Activated T-helper 1 cell treated with anti-CD3 and anti-CD28 coated beads, Interleukin-12 subunit alpha, Interleukin-12 subunit beta, Interleukin-2, Interleukin-4 antibody, amounts not matched to agents 30 ng/mL and 10 ng/mL and 1 ng/mL, durations not matched to agents 14 hours and 24 hours and 36 hours (primary cell): ENCODE measurements at regions of chr3 and their contacts with region 1.

Region 1: DNA sequence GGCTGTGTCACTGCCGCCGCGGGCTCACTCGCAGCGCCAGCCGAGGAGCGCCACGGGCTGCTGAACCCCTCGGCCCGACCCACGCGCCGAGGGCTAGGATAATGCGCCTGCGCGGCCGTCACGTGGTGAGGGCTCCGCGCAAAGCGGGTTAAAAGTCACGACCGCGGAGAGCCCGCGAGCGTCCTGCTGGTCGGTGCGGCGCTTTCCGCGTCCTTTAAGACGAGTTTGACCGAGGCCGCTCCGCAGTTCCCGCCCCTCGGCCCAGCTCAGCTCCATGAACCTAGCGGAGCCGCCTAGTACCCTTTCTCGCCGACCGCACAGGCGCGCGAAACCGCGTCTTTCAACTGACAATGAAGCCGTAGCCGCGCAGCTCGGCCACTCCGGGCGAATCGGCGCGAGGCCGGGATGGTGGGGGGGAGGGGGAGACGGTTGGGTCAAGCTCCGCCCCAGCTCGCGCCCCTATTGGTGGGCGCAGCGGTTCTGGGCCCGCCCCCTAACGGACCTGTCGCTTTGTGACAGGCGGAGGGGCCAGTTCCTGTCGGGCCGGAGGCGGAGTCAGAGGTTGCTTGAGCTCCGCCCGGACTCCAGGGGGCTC is 636 bp upstream of the STT3B start:
- DNase-seq: peak; percentile 98
- H3K4me3 Mint-ChIP-seq: no peak overlapping the region
- H3K27ac Mint-ChIP-seq: peak overlapping the region; percentile 99
- H3K4me1 Mint-ChIP-seq: peaks cover 21% of the 10 kb centered on the region
- H3K27me3 Mint-ChIP-seq: no peaks in the 10 kb centered on the region

Region 2: DNA sequence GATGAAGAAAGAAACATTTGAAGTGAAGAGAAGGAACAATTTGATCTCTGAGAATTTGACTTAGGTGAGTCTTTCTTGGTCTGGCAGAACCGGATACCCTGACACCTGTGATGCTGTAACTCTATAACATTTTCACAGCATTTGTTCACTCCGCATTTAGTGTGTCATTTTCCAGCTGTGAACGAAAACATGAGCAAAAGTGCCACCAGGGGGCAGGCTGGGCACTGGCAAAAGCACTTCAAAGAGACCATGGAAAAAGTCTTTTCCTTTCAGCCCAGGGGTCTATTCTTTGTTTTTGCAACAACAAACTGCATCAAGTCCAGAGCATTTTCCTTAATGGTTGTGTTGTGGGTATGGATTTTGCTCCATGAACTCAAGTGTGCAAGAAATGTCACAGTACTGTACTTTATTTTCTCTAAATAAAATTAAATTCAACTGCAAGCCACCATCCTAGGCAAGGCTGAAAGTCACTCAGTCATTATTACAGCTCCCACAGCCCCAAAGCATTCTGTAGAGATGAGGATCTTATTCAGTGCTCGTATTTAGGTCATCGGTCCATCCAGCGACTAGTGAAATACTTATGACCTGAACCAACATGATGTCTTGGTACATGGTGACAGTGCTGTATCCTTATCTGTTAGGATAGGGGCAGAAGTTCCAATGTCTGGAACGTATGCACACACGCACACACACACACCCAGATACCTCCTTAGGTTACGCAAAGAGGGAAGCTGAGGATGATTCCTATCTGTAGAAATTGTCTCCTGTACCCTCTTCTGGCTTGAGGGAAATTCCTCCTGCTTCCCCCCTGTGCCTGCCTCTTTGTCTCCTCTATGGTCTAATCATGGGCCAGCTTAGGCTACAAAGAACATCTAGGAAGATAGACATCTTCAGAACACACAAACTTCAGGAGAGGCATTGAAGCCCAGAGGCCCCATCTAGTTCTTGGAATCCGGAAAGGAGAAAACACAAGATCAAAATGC is 763.1 kb before region 1 on chr3:
- intact Hi-C with region 1: loop called (anchors 5 kb)
- DNase-seq: peak; percentile 59
- H3K4me3 Mint-ChIP-seq: no peak overlapping the region
- H3K27ac Mint-ChIP-seq: no peak overlapping the region
- H3K4me1 Mint-ChIP-seq: peaks cover 14% of the 10 kb centered on the region
- H3K27me3 Mint-ChIP-seq: peaks cover 20% of the 10 kb centered on the region

Region 3: GRCh38 chr3:31197941-31198340 is 334.1 kb before region 1 on chr3:
- intact Hi-C with region 1: no loop called
- DNase-seq: no peak
- H3K4me3 Mint-ChIP-seq: no peak overlapping the region
- H3K27ac Mint-ChIP-seq: no peak overlapping the region
- H3K4me1 Mint-ChIP-seq: peaks cover 6% of the 10 kb centered on the region
- H3K27me3 Mint-ChIP-seq: no peaks in the 10 kb centered on the region

Region 4: DNA sequence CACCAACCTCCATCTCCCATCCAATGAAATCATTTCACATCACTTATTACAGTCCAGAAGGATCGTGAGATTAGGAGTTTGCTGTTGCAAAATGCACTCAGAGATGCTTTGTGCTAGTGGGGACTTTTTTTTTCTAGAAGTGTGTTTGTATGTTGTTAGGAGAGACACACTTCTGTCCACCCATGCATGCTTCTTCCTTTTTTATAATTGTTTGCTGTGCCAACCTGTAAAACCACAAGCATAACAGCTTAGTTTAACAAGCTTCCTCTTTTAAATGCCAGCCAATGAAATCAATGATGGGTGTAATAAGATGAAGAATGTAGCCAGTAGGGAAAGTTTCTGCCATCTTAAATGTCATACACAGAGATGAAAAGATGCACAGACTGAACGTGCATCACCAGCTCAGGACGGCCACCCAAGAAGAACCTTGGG is 304.9 kb before region 1 on chr3:
- intact Hi-C with region 1: loop called (anchors 5 kb)
- DNase-seq: no peak
- H3K4me3 Mint-ChIP-seq: peak overlapping the region; percentile 17
- H3K27ac Mint-ChIP-seq: peak overlapping the region; percentile 70
- H3K4me1 Mint-ChIP-seq: peaks cover 83% of the 10 kb centered on the region
- H3K27me3 Mint-ChIP-seq: no peaks in the 10 kb centered on the region

Region 5: GRCh38 chr3:31472479-31473390 is 59.4 kb before region 1 on chr3:
- intact Hi-C with region 1: loop called (anchors 1 kb)
- DNase-seq: peak; percentile 17
- H3K4me3 Mint-ChIP-seq: no peak overlapping the region
- H3K27ac Mint-ChIP-seq: peak overlapping the region; percentile 59
- H3K4me1 Mint-ChIP-seq: peaks cover 19% of the 10 kb centered on the region
- H3K27me3 Mint-ChIP-seq: peaks cover 9% of the 10 kb centered on the region

Region 6: GRCh38 chr3:31768479-31769123 is 236.5 kb after region 1 on chr3:
- intact Hi-C with region 1: loop called (anchors 1 kb)
- DNase-seq: peak; percentile 42
- H3K4me3 Mint-ChIP-seq: peak overlapping the region; percentile 41
- H3K27ac Mint-ChIP-seq: peak overlapping the region; percentile 52
- H3K4me1 Mint-ChIP-seq: peaks cover 82% of the 10 kb centered on the region
- H3K27me3 Mint-ChIP-seq: no peaks in the 10 kb centered on the region

Region 7: GRCh38 chr3:32117324-32117723 is 585.2 kb after region 1 on chr3:
- intact Hi-C with region 1: loop called (anchors 2 kb)
- DNase-seq: no peak
- H3K4me3 Mint-ChIP-seq: no peak overlapping the region
- H3K27ac Mint-ChIP-seq: no peak overlapping the region
- H3K4me1 Mint-ChIP-seq: peaks cover 34% of the 10 kb centered on the region
- H3K27me3 Mint-ChIP-seq: no peaks in the 10 kb centered on the region